ENCODE measurements at regions of chr22 and their contacts with region 1.

Region 1: GRCh38 chr22:23128269-23129108 is 13.3 kb downstream of the RSPH14 start:
- DNase-seq: peak; percentile 89
- H3K4me3 Mint-ChIP-seq: no peak overlapping the region
- H3K27ac Mint-ChIP-seq: no peak overlapping the region
- H3K4me1 Mint-ChIP-seq: no peaks in the 10 kb centered on the region
- H3K27me3 Mint-ChIP-seq: peaks cover 14% of the 10 kb centered on the region
- CTCF ChIP-seq: peak; percentile 75

Region 2: DNA sequence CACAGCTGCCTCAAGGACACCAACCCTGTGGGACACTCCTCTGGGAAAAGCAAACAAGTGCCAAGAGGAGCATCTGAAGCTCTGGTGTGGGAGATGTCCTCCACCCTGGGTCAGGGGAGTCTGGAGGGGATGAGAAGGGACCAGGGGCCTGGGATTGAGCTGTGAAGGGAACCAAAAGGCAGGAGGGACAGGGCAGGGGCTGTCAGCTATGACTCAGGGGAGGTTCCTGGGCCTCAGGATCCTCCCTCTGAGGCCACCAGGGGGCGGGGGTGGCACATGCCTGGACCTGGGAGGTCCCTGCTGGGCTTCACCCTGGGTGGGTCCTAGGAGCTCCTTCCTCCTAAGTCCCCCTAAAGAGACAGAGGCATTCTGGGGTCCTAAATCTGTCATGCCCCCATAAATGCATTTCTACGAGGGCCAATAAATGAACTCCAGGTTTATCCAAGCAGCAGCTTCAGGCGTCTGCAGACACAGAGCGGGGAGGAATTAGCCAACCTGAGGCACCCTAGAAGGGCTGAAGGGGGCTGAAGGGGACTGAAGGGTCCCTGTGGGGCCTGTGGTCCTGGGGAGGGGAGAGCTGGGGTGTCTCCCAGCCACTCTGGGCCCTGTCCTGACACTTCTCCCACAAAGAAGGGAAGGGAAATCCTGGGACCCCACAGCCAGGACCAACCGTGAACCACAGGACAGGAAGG is 272.7 kb before region 1 on chr22:
- CTCF ChIA-PET with region 1: no interaction called
- intact Hi-C with region 1: loop called (anchors 10 kb)
- DNase-seq: peak; percentile 60
- H3K4me3 Mint-ChIP-seq: no peak overlapping the region
- H3K27ac Mint-ChIP-seq: no peak overlapping the region
- H3K4me1 Mint-ChIP-seq: no peaks in the 10 kb centered on the region
- H3K27me3 Mint-ChIP-seq: peaks cover 87% of the 10 kb centered on the region
- CTCF ChIP-seq: peak; percentile 76

Measured in Calu3 (cell line).